Activated CD8-positive, alpha-beta T cell treated with anti-CD3 and anti-CD28 coated beads for 36 hours (primary cell): ENCODE measurements at regions of chr2 and their contacts with region 1.

Region 1: DNA sequence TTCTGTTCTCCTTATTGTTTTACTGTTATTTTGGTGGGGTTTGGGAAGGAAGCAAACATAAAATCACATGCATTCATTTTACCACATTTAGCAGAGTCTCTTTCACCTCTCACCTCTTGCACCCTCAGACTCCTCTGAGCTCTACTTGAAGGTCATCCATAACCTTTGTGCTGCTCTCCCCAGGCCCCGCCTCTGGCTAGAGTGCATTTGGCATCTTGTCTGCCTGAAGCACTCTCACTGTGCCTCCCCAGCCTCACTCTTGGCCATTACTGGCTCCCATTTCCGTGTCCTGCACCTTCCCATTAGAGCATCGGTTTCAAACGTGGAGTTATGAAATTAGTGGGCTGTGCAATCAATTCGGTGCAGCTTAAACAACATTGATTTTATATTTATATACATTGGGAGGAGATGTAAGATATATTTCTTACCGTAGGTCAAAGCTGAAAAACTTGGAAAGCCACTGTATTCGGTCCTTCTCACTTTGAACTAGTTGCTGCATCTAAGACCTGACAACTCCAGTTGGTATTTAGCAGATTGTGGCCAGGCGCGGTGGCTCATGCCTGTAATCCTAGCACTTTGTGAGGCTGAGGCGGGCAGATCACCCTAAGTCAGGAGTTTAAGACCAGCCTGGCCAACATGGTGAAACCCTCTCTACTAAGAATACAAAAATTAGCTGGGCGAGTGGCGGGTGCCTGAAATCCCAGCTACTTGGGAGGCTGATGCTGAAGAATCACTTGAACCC is 6.9 kb upstream of the ZFAND2B start:
- DNase-seq: no peak
- ATAC-seq: peak; percentile 71
- H3K4me3 Mint-ChIP-seq: peak overlapping the region; percentile 62
- H3K27ac Mint-ChIP-seq: peak overlapping the region; percentile 40
- H3K4me1 Mint-ChIP-seq: peaks cover 17% of the 10 kb centered on the region
- H3K27me3 Mint-ChIP-seq: no peaks in the 10 kb centered on the region
- CTCF ChIP-seq: no peak

Region 2: DNA sequence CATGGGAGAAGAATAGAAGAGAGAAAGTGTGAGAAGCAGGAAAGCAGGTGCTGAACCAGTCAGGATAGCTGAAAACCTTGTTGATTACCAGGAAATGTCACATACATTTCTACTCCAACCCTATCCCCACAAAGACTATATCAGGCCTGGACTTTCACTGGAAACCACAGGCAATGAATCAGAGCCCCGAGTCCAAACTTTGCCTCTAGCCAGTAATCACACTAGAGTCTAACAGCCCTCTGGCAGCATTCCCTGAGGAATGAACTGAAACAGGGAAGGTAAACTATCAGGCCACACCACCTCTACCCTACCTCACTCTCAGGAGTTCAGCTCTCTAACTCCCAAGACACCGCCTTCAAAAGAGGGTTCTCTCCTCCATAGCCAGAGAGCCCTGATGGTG is 120.2 kb before region 1 on chr2:
- CTCF ChIA-PET with region 1: no interaction called
- POLR2A ChIA-PET with region 1: no interaction called
- intact Hi-C with region 1: no loop called
- DNase-seq: no peak
- ATAC-seq: no peak
- H3K4me3 Mint-ChIP-seq: no peak overlapping the region
- H3K27ac Mint-ChIP-seq: no peak overlapping the region
- H3K4me1 Mint-ChIP-seq: no peaks in the 10 kb centered on the region
- H3K27me3 Mint-ChIP-seq: no peaks in the 10 kb centered on the region
- CTCF ChIP-seq: no peak

Region 3: DNA sequence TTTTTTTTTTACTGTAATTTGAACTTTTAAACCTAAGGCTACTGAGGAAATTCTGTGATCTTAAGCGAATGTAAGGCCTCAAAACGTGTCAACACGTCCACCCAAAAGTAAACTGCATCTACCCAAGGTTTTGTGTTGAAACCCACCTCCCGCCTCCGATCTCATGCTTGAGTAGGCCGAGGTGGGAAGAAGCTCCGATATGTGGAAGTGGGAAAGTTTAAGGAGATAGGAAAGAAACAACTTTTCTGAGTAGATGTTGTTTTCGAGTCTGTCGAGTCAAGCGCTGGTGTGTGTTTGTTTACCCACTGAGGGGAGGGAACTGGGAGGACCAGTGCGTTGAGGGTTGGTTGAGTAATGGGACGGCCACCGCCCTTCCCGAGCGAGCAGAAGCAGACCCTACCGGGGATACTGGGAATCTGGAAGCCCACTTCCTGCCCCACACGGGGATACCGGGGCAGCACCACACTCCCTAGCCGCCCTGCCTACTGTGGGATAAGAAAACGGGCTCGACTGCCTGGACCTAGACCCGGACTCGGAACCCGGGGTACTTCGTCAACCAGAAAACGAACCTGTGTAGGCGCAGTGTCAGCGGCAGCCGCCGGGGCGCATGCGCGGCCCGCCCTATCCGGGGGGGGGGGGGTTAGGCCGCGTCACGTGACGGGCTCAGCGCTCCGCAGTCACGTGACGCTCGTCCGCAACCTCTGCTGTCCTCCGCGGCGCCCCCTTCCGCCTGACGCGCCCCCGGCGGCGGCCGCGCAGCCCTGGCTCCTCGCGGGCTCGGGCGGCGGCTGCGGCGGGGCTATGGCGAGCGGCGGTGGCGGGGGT is 21.9 kb before region 1 on chr2 and contains the start of gene RETREG2:
- CTCF ChIA-PET with region 1: interaction called, 5 read pairs
- POLR2A ChIA-PET with region 1: interaction called, 26 read pairs
- intact Hi-C with region 1: no loop called
- DNase-seq: peak; percentile 82
- ATAC-seq: peak; percentile 46
- H3K4me3 Mint-ChIP-seq: peak within 1 kb of the TSS; percentile 97
- H3K27ac Mint-ChIP-seq: peak within 1 kb of the TSS; percentile 97
- H3K4me1 Mint-ChIP-seq: peaks cover 57% of the 10 kb centered on the region
- H3K27me3 Mint-ChIP-seq: no peaks in the 10 kb centered on the region
- CTCF ChIP-seq: peak; percentile 40
- total RNA-seq, gene RETREG2: 63.8 to 67.8 TPM

Region 4: GRCh38 chr2:219184121-219184520 is 15.5 kb before region 1 on chr2:
- CTCF ChIA-PET with region 1: interaction called, 5 read pairs
- POLR2A ChIA-PET with region 1: interaction called, 26 read pairs
- intact Hi-C with region 1: no loop called
- DNase-seq: no peak
- ATAC-seq: no peak
- H3K4me3 Mint-ChIP-seq: no peak overlapping the region
- H3K27ac Mint-ChIP-seq: peak overlapping the region; percentile 37
- H3K4me1 Mint-ChIP-seq: peaks cover 41% of the 10 kb centered on the region
- H3K27me3 Mint-ChIP-seq: no peaks in the 10 kb centered on the region
- CTCF ChIP-seq: no peak

Region 5: GRCh38 chr2:219253753-219254590 is 54.3 kb after region 1 on chr2 and contains the start of gene TUBA4A:
- CTCF ChIA-PET with region 1: no interaction called
- POLR2A ChIA-PET with region 1: interaction called, 10 read pairs
- intact Hi-C with region 1: no loop called
- DNase-seq: peak; percentile 92
- ATAC-seq: peak; percentile 73
- H3K4me3 Mint-ChIP-seq: peak within 1 kb of the TSS; percentile 77
- H3K27ac Mint-ChIP-seq: peak within 1 kb of the TSS; percentile 94
- H3K4me1 Mint-ChIP-seq: peaks cover 46% of the 10 kb centered on the region
- H3K27me3 Mint-ChIP-seq: no peaks in the 10 kb centered on the region
- CTCF ChIP-seq: no peak
- total RNA-seq, gene TUBA4A: 226 TPM

Region 6: GRCh38 chr2:219402665-219403515 is 203.2 kb after region 1 on chr2:
- CTCF ChIA-PET with region 1: no interaction called
- POLR2A ChIA-PET with region 1: no interaction called
- intact Hi-C with region 1: no loop called
- DNase-seq: peak; percentile 79
- ATAC-seq: peak; percentile 99
- H3K4me3 Mint-ChIP-seq: no peak overlapping the region
- H3K27ac Mint-ChIP-seq: no peak overlapping the region
- H3K4me1 Mint-ChIP-seq: no peaks in the 10 kb centered on the region
- H3K27me3 Mint-ChIP-seq: peaks cover 8% of the 10 kb centered on the region
- CTCF ChIP-seq: peak; percentile 77